PC-3 (cell line): ENCODE measurements at regions of chr6 and their contacts with region 1.

Region 1: DNA sequence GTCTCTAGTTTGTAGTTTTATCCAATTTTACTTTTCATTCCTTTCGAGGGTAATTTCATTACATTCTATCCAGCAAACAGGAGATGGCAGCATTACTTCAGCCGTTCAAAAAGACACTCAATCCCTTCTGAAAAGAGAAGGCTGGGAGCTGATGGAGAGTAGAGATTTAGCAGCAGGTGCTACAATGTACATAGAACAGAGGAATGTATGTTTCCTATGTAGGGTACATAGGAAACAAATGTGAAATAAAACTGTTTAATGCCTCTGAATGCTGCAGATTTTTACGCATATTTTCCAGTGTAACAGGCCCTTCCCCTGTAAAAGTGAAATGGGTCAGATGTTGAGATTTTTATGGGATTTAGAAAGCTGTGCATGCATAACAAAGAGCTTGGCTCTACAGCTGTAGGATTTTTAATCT is 16.0 kb downstream of the RPS12 start:
- DNase-seq: peak; percentile 60
- ATAC-seq: peak; percentile 61; the same call in 1 of the 2 replicates
- H3K4me3 ChIP-seq: no peak overlapping the region
- H3K27ac ChIP-seq: no peak overlapping the region
- H3K4me1 ChIP-seq: no peaks in the 10 kb centered on the region
- H3K27me3 ChIP-seq: no peaks in the 10 kb centered on the region
- CTCF ChIP-seq: peak; percentile 73

Region 2: GRCh38 chr6:131923356-131923755 is 907.0 kb before region 1 on chr6:
- CTCF ChIA-PET with region 1: no interaction called
- POLR2A ChIA-PET with region 1: no interaction called
- intact Hi-C with region 1: no loop called
- DNase-seq: peak; percentile 67
- ATAC-seq: no peak; the same call in 1 of the 2 replicates
- H3K4me3 ChIP-seq: no peak overlapping the region
- H3K27ac ChIP-seq: no peak overlapping the region
- H3K4me1 ChIP-seq: peaks cover 4% of the 10 kb centered on the region; the same call in 1 of the 2 replicates
- H3K27me3 ChIP-seq: no peaks in the 10 kb centered on the region
- CTCF ChIP-seq: peak; percentile 75

Region 3: DNA sequence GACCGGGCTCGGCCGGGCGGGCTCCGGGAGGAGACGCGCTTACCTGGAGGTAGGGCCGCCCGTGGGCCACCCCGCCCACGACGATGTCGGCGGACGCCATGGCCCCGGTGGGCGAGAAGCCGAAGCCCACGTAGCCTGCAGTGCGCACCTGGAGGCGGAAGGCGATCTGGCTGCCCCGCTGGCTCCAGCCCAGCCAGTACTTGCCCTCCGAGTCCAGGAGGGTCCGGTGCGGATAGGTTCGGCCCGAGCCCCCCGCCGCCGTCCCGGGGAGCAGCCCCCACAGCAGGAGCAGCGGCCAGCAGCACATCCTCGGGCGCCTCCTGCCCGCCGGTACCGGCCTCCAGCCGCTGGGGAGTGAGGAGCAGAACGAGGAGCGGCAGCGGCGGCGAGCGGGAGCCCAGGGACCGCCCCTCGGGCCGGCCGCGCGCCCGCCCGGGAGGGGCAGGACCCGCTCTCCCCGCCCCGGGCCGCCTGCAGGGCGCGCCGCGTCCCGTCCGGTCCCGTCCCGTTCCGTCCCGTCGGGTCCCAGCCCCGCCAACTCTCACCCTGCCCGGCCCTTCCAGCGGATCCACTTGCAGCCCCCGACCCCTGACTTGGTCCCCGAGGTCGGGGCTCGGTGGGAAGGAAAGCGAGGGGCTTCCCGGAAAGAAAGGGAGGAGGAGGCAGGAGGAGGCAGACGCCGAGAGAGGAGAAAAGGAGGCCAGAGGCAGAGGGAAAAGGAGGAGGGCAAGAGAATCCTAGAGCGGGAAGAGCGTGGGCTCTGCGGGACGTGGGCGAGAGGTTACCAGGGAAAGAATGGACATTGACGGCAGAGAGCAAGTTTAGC is 429.0 kb before region 1 on chr6 and contains the start of gene MOXD1:
- CTCF ChIA-PET with region 1: no interaction called
- POLR2A ChIA-PET with region 1: no interaction called
- intact Hi-C with region 1: no loop called
- DNase-seq: peak; percentile 61
- ATAC-seq: peak; percentile 52
- H3K4me3 ChIP-seq: peak within 1 kb of the TSS; percentile 84
- H3K27ac ChIP-seq: peak within 1 kb of the TSS; percentile 30; the same call in 1 of the 2 replicates
- H3K4me1 ChIP-seq: peaks cover 43% of the 10 kb centered on the region
- H3K27me3 ChIP-seq: no peaks in the 10 kb centered on the region
- CTCF ChIP-seq: no peak
- total RNA-seq, gene MOXD1: 5.0 and 9.9 TPM in 2 replicates

Region 4: DNA sequence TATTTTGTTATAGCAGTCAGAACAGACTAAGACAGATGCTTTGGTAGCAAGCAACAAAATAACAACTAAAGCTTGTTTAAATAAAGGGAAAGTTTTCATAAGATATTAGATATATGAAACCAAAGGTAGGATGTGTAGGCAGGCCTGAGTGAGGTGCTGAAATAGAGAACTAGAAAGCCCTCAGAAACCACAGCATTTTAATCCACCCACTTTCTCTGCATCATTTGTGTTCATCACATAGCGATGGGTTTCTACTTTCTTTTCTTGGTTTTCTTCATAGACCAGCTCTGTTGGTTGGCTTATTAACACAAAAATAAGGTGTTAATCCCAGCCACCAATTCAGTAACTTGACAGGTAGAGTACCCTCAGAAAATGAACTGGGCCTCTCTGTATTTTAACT is 42.6 kb after region 1 on chr6:
- CTCF ChIA-PET with region 1: no interaction called
- POLR2A ChIA-PET with region 1: no interaction called
- intact Hi-C with region 1: no loop called
- DNase-seq: no peak
- ATAC-seq: no peak
- H3K4me3 ChIP-seq: no peak overlapping the region
- H3K27ac ChIP-seq: no peak overlapping the region
- H3K4me1 ChIP-seq: no peaks in the 10 kb centered on the region
- H3K27me3 ChIP-seq: no peaks in the 10 kb centered on the region
- CTCF ChIP-seq: no peak

Region 5: DNA sequence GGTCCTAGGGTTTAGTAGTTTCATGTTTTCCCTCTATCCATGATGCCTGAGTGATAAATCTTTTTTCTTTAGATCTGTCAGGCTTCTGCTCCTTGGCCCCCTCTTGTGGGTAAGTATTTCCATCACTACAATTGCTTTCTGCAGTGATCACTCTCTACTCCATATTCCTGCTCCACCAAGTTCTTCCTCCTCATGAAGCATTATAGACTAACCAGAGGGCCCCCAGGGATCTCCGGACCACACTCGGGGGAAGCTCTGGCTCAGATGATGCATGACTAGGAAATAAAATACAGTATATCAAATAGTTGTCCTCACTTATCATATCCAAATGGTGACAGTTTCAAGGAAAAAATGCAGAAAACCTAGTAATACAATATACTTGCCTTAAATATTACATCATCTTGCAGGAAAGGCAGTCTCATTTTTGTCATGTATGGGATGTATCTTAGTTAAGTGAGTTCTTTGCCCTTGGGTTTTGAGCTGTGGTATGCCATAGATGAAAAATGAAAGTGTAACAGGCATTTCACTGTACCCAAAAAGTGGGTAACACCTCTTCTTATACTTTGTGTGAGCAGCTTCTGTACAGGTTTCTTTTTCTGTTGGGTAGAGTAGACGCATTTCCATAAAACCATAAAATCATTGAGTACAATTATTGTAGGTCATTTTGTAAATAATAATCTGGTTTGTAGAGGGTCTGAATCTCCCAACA is 209.9 kb after region 1 on chr6:
- CTCF ChIA-PET with region 1: no interaction called
- POLR2A ChIA-PET with region 1: no interaction called
- intact Hi-C with region 1: loop called (anchors 2 kb)
- DNase-seq: peak; percentile 55
- ATAC-seq: peak; percentile 53
- H3K4me3 ChIP-seq: no peak overlapping the region
- H3K27ac ChIP-seq: no peak overlapping the region
- H3K4me1 ChIP-seq: no peaks in the 10 kb centered on the region
- H3K27me3 ChIP-seq: no peaks in the 10 kb centered on the region
- CTCF ChIP-seq: peak; percentile 72

Region 6: DNA sequence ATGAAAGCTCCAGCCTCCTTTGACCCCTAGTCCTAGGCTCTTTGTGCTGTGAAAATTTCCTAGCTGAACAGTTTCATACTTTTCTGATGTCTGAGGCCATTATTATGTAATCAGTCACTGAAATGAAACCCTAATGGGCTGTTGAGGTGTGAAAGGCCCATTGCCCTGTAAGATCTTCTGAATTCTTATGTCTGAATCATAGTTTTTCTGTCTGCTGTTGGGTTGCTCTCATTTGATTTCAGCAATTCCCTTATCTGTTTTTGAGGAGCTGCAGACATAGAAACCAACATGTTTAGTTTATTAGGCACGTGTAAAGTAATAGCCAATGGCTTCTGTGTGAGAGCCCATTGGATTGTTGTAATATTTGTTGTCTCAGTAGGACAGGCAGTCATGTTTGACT is 528.9 kb after region 1 on chr6:
- CTCF ChIA-PET with region 1: no interaction called
- POLR2A ChIA-PET with region 1: no interaction called
- intact Hi-C with region 1: loop called (anchors 10 kb)
- DNase-seq: no peak
- ATAC-seq: no peak
- H3K4me3 ChIP-seq: no peak overlapping the region
- H3K27ac ChIP-seq: no peak overlapping the region
- H3K4me1 ChIP-seq: no peaks in the 10 kb centered on the region
- H3K27me3 ChIP-seq: no peaks in the 10 kb centered on the region
- CTCF ChIP-seq: no peak

Region 7: DNA sequence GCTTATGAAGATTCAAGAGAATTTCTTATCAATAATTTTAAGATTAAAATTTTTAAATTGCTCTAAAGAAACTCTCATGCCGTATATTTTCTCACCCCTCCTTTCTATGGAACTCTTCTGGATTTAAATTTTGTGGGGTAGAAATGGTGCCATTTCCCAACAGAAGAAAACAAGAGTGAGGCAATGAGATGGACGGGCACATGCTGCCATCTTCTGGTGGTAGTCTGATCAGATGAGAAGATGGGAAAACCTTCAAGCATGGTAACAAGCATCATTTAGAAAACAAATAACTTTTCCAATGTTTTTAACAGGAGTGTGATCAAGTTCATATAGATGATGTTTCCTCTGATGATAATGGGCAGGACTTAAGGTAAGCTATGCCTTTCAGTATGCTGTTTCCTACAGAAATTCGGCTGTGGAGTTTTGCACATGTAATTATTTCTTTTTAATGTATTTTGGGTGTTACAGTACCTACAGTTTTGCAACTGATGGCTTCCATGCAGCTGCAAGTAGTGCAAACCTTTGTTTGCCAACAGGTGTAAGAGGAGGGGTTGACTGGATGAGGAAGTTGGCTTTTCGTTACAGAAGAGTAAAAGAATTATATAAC is 682.2 kb after region 1 on chr6:
- CTCF ChIA-PET with region 1: no interaction called
- POLR2A ChIA-PET with region 1: no interaction called
- intact Hi-C with region 1: loop called (anchors 1 kb)
- DNase-seq: peak; percentile 70
- ATAC-seq: 0 out of 2 replicates have a peak, but pooled peaks have one; percentile 42
- H3K4me3 ChIP-seq: no peak overlapping the region
- H3K27ac ChIP-seq: no peak overlapping the region
- H3K4me1 ChIP-seq: no peaks in the 10 kb centered on the region
- H3K27me3 ChIP-seq: no peaks in the 10 kb centered on the region
- CTCF ChIP-seq: peak; percentile 74

Region 8: DNA sequence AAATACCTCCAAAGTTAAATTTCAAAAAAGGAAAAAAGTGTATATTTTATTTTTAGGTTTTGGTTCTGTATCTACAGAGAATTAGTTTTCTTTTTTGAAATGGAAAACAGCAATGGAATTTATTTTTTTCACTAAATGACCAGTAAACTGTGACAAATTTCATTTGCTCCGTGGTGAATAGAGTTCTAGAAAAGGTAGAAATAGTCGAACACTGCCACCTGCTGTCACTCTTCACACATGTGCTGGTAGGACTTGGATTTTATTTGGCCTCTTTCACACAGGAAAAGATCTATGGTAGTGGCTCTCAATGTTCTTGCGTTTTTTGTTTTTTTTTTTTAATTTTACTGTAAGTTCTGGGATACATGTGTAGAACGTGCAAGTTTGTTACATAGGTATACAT is 723.3 kb after region 1 on chr6:
- CTCF ChIA-PET with region 1: interaction called, 5 read pairs
- POLR2A ChIA-PET with region 1: no interaction called
- intact Hi-C with region 1: loop called (anchors 1 kb)
- DNase-seq: peak; percentile 66
- ATAC-seq: peak; percentile 64
- H3K4me3 ChIP-seq: no peak overlapping the region
- H3K27ac ChIP-seq: no peak overlapping the region
- H3K4me1 ChIP-seq: peaks cover 11% of the 10 kb centered on the region
- H3K27me3 ChIP-seq: no peaks in the 10 kb centered on the region
- CTCF ChIP-seq: peak; percentile 66

Region 9: DNA sequence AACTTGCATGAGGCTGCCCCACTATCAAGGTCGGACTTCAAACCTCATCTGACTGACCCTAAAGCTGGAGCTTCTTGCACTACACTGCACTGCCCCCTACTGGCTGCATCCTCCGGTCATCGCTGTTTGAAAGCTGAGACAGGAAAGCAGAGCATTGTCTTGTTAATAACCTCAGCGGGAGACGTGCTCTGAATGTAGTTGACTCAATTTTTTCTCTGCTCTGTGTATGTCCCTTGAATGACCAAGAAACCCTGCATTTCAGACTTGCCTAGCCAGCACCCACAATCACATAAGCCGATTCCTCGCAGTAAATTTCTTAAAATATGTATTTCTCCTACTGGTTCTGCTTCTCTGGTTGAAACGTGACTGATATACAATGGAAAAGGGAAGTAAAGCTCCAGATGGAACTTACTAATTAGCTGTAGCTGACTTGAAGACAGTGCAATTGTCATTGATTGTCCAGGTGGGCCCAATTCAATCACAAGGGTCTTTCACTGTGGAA is 1086.4 kb after region 1 on chr6:
- CTCF ChIA-PET with region 1: no interaction called
- POLR2A ChIA-PET with region 1: no interaction called
- intact Hi-C with region 1: loop called (anchors 10 kb)
- DNase-seq: peak; percentile 86
- ATAC-seq: peak; percentile 82
- H3K4me3 ChIP-seq: 0 out of 2 replicates have a peak overlapping the region, but pooled peaks have one; percentile 39
- H3K27ac ChIP-seq: no peak overlapping the region
- H3K4me1 ChIP-seq: no peaks in the 10 kb centered on the region; the same call in 1 of the 2 replicates
- H3K27me3 ChIP-seq: no peaks in the 10 kb centered on the region
- CTCF ChIP-seq: peak; percentile 89